ENCODE measurements at regions of chr20 and their contacts with region 1.

Region 1: DNA sequence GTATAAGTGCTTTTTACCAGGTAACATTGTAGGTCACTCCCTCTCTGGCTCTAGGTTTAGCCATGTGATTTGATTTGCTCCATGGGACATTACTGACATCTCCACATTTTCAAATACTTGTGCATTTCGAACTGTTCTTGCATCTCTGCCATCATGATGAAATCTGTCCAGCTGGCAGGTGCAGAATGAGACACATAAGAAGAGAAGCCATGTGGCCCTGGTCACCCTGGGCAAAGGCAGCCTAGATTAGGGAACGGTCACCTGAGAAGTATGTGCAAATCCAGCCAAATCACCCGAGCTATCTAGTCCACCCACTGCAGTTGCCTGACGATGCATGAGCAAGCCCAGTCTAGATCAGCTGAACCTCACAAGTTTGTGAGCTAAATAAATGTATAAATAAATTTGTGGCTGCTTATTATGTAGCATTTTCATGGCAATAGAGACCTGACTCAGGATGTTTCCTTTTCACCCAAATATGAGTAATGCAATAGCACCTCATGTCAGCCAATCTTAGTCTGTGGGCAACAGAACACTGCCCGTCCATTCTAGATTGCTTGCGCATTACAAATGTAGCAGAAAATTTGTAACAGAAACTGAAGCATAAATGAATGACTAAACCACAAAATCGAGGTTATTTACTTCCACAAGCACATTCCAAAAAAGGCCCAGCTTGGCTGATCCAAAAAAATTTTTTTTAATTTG is 115.2 kb downstream of the PAK5 start:
- DNase-seq: no peak
- ATAC-seq: no peak

Region 2: GRCh38 chr20:8305449-8305978 is 1418.1 kb before region 1 on chr20:
- intact Hi-C with region 1: loop called (anchors 5 kb)
- DNase-seq: peak; percentile 61
- ATAC-seq: no peak

Region 3: GRCh38 chr20:9792674-9793073 is 69.0 kb after region 1 on chr20:
- intact Hi-C with region 1: loop called (anchors 5 kb)
- DNase-seq: no peak
- ATAC-seq: no peak